ENCODE measurements at regions of chr9 and their contacts with region 1.

Region 1: GRCh38 chr9:121278535-121279261 is 10.7 kb downstream of the GSN start:
- DNase-seq: peak; percentile 70 to 72
- H3K4me3 ChIP-seq: no peak overlapping the region
- H3K4me3 Mint-ChIP-seq: peak overlapping the region; percentile 50
- H3K27ac Mint-ChIP-seq: peak overlapping the region; percentile 79
- H3K4me1 ChIP-seq: peaks cover 34% of the 10 kb centered on the region
- H3K4me1 Mint-ChIP-seq: peaks cover 37% of the 10 kb centered on the region
- H3K27me3 ChIP-seq: no peaks in the 10 kb centered on the region
- H3K27me3 Mint-ChIP-seq: no peaks in the 10 kb centered on the region
- CTCF ChIP-seq: peak; percentile 84 to 88

Region 2: DNA sequence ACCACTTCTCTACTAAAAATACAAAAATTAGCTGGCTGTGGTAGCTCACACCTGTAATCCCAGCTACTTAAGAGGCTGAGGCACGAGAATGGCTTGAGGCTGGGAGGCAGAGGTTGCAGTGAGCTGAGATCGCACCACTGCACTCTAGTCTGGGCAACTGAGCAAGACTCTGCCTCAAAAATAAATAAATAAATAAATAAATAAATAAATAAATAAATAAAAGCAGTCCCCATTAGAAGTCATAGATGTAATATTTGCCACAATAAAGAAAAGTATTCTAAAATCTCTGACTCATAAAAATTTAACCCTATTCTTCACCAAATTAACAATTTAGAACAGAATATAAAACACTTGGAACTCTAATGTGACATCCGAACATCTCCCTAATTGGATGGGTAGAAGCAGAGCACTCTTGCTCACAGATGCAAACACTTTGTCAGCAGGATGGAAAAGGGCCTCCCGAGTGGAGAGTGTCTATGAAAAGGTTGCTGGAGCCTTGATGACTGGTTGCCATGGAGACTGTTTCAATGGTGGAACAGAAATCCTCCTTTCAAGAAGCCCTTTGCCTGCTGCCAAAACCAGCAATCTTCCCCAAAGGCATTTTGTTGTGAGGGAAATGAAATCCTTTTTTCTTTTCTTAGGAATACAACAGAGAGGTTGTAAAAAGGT is 313.2 kb before region 1 on chr9:
- CTCF ChIA-PET with region 1: no interaction called
- POLR2A ChIA-PET with region 1: no interaction called
- intact Hi-C with region 1: no loop called
- DNase-seq: no peak
- H3K4me3 ChIP-seq: no peak overlapping the region
- H3K4me3 Mint-ChIP-seq: no peak overlapping the region
- H3K27ac Mint-ChIP-seq: no peak overlapping the region
- H3K4me1 ChIP-seq: peaks cover 8% of the 10 kb centered on the region
- H3K4me1 Mint-ChIP-seq: peaks cover 10% of the 10 kb centered on the region
- H3K27me3 ChIP-seq: no peaks in the 10 kb centered on the region
- H3K27me3 Mint-ChIP-seq: no peaks in the 10 kb centered on the region
- CTCF ChIP-seq: no peak

Region 3: GRCh38 chr9:121267689-121268597 is 10.8 kb before region 1 on chr9 and contains the start of gene GSN:
- CTCF ChIA-PET with region 1: interaction called, 42 read pairs
- POLR2A ChIA-PET with region 1: interaction called, 3 read pairs
- intact Hi-C with region 1: no loop called
- DNase-seq: peak; percentile 74 to 82
- H3K4me3 ChIP-seq: peak within 1 kb of the TSS; percentile 73
- H3K4me3 Mint-ChIP-seq: peak within 1 kb of the TSS; percentile 87
- H3K27ac Mint-ChIP-seq: peak within 1 kb of the TSS; percentile 76
- H3K4me1 ChIP-seq: peaks cover 24% of the 10 kb centered on the region
- H3K4me1 Mint-ChIP-seq: peaks cover 25% of the 10 kb centered on the region
- H3K27me3 ChIP-seq: no peaks in the 10 kb centered on the region
- H3K27me3 Mint-ChIP-seq: no peaks in the 10 kb centered on the region
- CTCF ChIP-seq: peak in 1 of 2 experiments; percentile 2
- total RNA-seq, gene GSN: 99.6 and 100 TPM in 2 replicates

Region 4: GRCh38 chr9:121299467-121300234 is 21.0 kb after region 1 on chr9:
- CTCF ChIA-PET with region 1: interaction called, 12 read pairs
- POLR2A ChIA-PET with region 1: no interaction called
- intact Hi-C with region 1: no loop called
- DNase-seq: peak in 1 of 2 experiments; percentile 44
- H3K4me3 ChIP-seq: peak overlapping the region; percentile 49
- H3K4me3 Mint-ChIP-seq: peak overlapping the region; percentile 83
- H3K27ac Mint-ChIP-seq: peak overlapping the region; percentile 74
- H3K4me1 ChIP-seq: peaks cover 59% of the 10 kb centered on the region
- H3K4me1 Mint-ChIP-seq: peaks cover 41% of the 10 kb centered on the region
- H3K27me3 ChIP-seq: no peaks in the 10 kb centered on the region
- H3K27me3 Mint-ChIP-seq: no peaks in the 10 kb centered on the region
- CTCF ChIP-seq: no peak

Region 5: DNA sequence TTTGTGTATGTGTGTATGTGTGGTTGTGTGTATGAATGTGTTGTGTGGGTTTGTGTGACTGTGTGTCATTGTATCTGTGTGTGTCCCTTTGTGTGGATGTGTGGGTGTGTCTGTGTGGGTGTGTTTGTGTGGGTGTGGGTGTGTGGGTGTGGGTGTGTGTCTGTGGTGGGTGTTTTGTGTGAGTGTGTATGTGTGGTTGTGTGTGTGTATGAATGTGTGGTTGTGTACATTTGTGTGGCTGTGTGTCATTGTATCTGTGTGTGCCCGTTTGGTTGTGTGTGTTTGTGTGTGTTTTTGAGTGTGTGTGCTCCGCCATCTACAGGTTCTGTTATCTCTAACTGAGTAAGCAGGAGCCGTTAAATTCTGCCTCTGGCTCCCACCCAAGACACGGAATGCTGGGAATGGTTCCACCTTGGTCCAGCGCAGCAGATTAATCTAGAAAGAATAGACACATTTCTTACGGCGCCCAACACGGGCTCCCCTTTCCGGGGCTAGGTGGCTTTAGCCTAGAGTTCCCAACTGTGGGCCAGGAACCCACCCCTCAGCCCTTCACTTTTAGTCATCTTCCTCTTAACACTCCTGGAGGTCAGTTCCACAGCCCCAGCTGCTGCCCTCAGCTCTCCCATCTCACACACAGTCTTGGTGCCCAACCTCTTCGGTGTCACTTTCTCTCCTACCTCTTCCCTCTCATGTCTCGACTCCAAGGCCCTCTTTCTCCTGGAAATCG is 617.3 kb after region 1 on chr9:
- CTCF ChIA-PET with region 1: no interaction called
- POLR2A ChIA-PET with region 1: no interaction called
- intact Hi-C with region 1: no loop called
- DNase-seq: peak; percentile 14 to 39
- H3K4me3 ChIP-seq: no peak overlapping the region
- H3K4me3 Mint-ChIP-seq: no peak overlapping the region
- H3K27ac Mint-ChIP-seq: no peak overlapping the region
- H3K4me1 ChIP-seq: no peaks in the 10 kb centered on the region
- H3K4me1 Mint-ChIP-seq: no peaks in the 10 kb centered on the region
- H3K27me3 ChIP-seq: no peaks in the 10 kb centered on the region
- H3K27me3 Mint-ChIP-seq: peaks cover under 1% of the 10 kb centered on the region
- CTCF ChIP-seq: no peak

Measured in Caco-2 (cell line).